ENCODE measurements at regions of chr2 and their contacts with region 1.

Region 1: DNA sequence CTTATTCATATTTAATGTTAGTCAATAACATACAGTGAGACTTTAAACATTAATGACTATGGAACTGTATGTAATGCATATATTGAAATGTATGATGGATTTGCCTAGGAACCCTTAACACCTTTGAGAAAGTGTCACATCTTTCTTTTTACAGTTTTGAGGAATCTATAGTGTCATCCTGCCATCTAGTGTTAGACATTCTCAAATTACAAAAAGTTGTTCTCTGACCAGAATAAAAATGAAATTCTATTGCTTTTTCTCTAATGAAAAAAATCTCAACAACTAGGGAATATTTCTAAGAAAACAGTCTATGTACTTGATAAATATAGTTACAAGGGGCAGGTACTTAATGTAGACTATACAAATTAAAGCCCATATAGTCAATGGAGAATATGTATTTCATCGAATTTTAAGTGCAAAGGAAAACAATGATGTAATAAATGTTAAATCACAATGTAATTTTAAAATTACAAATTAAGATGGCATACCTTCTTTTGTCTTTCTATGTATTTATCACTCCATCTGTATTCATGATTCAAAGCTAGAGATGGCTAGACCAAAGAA is 5.1 kb upstream of the CALCRL start:
- DNase-seq: peak in 1 of 2 donors; percentile 50
- H3K4me3 ChIP-seq: no peak overlapping the region
- H3K27ac ChIP-seq: no peak overlapping the region
- H3K4me1 ChIP-seq: peaks cover 0 to 2% (median 0%) of the 10 kb centered on the region in 4 donors
- H3K27me3 ChIP-seq: no peaks in the 10 kb centered on the region
- CTCF ChIP-seq: peak in 3 of 7 experiments; percentile 4 to 17 (median 10)
- EP300 ChIP-seq: no peak
- POLR2A ChIP-seq: no peak

Region 2: DNA sequence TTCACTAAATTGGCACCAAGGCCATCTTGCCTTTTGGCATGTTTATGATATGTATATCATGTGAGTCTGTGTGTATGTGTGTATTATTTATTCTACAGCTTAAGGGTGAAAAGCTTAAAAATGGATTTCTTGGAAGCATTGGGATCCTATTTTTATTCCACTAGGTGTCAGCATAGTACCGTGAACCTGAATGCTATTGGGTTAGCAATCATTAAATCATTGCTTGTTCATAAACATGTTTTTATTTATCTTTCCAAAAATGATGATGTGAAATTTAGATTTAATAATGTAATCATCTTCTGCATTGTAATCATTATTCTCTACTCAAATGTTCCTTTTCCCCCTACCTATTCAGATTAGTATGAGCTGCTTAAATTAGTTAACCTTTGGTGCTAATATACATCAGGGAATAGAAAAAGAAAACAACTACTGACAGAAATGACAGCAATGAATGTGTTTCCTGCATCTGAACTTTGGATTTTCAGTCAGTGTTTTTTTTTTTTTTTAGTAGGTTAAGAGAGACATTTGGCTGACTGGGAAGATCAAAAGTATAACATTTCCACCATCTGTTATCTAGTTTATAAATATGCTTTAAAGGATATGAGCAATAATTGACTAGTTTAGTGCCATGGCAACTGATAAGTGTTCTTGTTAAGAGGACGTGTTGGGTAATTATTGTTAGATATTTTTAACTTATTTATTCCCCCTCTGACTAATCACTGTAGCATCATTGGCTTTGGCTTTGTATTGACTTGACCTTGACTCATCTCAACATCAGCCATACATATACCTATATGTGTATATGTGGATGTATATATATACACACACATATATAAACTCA is 590.1 kb before region 1 on chr2:
- intact Hi-C with region 1: loop called (anchors 5 kb)
- DNase-seq: peak in 1 of 2 donors; percentile 54
- H3K4me3 ChIP-seq: no peak overlapping the region
- H3K27ac ChIP-seq: no peak overlapping the region
- H3K4me1 ChIP-seq: no peaks in the 10 kb centered on the region
- H3K27me3 ChIP-seq: no peaks in the 10 kb centered on the region
- CTCF ChIP-seq: peak in 4 of 7 experiments; percentile 14 to 71 (median 46)
- EP300 ChIP-seq: no peak
- POLR2A ChIP-seq: no peak

Measured in stomach (tissue), 19 donors.